ENCODE measurements at regions of chr9 and their contacts with region 1.

Region 1: DNA sequence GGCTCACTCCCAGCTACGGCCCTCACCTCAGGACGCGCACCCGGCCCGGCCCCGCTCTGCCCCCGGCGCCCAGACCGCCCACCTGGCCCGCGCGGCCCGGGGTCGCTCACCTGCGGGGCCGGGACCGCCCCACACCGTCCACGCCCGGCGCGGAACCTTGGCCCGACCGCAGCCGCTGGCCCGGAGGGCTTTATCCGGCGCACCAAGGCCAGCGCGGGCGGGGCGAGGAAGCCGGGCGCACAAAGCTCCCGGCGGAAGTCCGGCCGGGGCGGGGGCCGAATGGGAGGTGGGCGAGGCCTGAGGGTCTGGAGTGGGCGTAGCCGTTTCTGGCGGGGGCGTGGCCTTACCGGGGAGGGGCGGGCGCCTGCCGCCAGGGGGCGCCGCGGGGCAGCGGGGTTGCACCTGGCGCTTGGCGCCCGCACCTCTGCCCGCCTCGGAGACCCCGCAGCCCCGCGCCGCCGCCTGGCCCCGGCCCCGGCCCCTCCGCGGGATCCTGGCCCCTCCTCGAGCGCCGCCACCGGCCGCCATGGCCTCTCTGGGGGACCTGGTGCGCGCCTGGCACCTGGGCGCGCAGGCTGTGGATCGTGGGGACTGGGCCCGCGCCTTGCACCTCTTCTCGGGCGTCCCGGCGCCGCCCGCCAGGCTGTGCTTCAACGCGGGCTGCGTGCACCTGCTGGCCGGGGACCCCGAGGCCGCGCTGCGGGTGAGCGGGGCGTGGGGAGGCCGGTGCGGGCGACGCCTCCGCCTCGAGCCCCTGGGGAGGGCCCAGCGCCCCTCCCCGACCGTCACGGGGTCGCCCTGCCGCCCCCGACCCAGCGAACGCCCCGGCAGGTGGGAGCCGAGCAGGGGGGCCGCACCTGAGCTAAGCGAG is at the starts of genes EXD3 and NOXA1:
- DNase-seq: peak; percentile 98
- ATAC-seq: peak; percentile 95
- H3K4me3 Mint-ChIP-seq: peak within 1 kb of the TSS; percentile 82
- H3K27ac Mint-ChIP-seq: peak within 1 kb of the TSS; percentile 66
- H3K4me1 Mint-ChIP-seq: peaks cover 12% of the 10 kb centered on the region
- H3K27me3 Mint-ChIP-seq: no peaks in the 10 kb centered on the region
- total RNA-seq, gene EXD3: 6.7 to 7.1 TPM
- total RNA-seq, gene NOXA1: 0.97 to 1.7 TPM

Region 2: DNA sequence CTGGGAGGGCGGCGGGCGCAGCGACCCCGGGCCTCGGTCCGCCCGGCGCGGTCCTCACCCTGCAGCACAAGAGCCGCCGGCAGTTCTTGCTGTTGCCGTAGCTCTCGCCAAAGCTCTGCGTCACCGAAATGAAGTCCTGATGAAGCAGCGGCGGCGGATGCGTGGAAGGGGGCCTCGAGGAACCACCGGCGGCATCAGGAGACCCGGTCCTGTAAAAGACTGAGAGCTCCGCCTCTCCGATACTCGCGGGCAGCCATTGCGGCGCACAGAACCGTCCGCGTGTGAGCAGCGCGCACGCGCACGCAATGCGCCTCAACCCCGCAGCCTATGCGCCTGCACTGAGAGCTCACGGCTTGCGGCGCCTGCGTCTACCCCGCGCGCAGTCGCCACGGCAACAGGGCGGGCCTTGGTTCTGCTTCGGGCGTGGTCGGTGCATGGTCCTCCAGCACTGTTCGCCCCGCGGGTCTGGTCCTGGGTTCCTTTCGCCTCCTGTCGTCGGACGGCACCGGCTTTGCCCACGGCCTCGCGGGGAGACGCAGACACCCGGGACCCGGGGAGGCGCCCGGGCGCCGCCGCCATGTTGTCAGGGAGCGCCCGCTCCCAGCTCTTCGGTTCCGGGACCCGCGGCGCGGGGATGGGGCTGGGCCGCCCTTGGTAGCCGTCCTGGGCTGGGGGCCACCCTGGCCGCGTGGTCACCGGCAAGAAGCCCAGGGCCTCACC is 293.6 kb before region 1 on chr9:
- CTCF ChIA-PET with region 1: no interaction called
- POLR2A ChIA-PET with region 1: no interaction called
- intact Hi-C with region 1: loop called in 1 of 2 experiments (anchors 2 kb)
- DNase-seq: peak; percentile 95
- ATAC-seq: peak; percentile 96
- H3K4me3 Mint-ChIP-seq: peak overlapping the region; percentile 89
- H3K27ac Mint-ChIP-seq: peak overlapping the region; percentile 70
- H3K4me1 Mint-ChIP-seq: peaks cover 21% of the 10 kb centered on the region
- H3K27me3 Mint-ChIP-seq: peaks cover 5% of the 10 kb centered on the region

Region 3: GRCh38 chr9:137254624-137255447 is 168.4 kb before region 1 on chr9 and contains the start of gene NELFB:
- CTCF ChIA-PET with region 1: interaction called, 5 read pairs
- POLR2A ChIA-PET with region 1: no interaction called
- intact Hi-C with region 1: loop called in 1 of 2 experiments (anchors 1 kb)
- DNase-seq: peak; percentile 97
- ATAC-seq: peak; percentile 94
- H3K4me3 Mint-ChIP-seq: peak within 1 kb of the TSS; percentile 87
- H3K27ac Mint-ChIP-seq: peak within 1 kb of the TSS; percentile 81
- H3K4me1 Mint-ChIP-seq: peaks cover 18% of the 10 kb centered on the region
- H3K27me3 Mint-ChIP-seq: no peaks in the 10 kb centered on the region
- total RNA-seq, gene NELFB: 41.4 to 54.1 TPM

Region 4: GRCh38 chr9:137445275-137445807 is 22.1 kb after region 1 on chr9:
- CTCF ChIA-PET with region 1: interaction called, 5 read pairs
- POLR2A ChIA-PET with region 1: no interaction called
- intact Hi-C with region 1: loop called (anchors 1 kb)
- DNase-seq: peak; percentile 91
- ATAC-seq: peak; percentile 91
- H3K4me3 Mint-ChIP-seq: no peak overlapping the region
- H3K27ac Mint-ChIP-seq: no peak overlapping the region
- H3K4me1 Mint-ChIP-seq: peaks cover 16% of the 10 kb centered on the region
- H3K27me3 Mint-ChIP-seq: peaks cover 10% of the 10 kb centered on the region

Region 5: DNA sequence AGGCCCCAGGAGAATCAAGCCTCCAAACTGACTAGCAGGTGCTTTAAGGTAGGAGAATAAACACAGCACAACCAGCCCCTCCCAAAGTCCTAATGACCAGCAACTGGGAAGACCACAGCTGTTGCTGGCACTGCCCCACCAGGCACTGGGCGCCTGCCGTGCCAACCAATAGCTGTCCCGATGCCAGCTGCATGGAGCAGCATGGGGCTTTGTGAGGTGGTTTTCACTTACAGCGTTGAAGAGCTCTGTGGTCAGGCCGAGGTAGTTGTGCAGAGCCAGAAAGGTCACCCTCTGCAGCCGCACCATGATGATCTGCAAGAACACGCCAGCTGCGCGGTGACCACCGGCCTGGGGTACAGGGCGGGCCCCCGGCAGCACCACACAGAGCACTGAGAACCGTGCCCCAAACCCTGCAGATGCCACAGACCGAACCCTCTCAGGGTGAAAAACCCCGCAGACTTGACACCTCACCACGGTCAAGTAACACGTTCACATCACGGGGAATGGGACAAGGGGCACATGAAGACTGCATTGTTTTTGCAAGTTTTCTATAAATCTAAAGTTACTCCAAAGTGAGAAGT is 98.3 kb after region 1 on chr9:
- CTCF ChIA-PET with region 1: interaction called, 5 read pairs
- POLR2A ChIA-PET with region 1: no interaction called
- intact Hi-C with region 1: loop called in 1 of 2 experiments (anchors 1 kb)
- DNase-seq: no peak
- ATAC-seq: no peak
- H3K4me3 Mint-ChIP-seq: no peak overlapping the region
- H3K27ac Mint-ChIP-seq: no peak overlapping the region
- H3K4me1 Mint-ChIP-seq: no peaks in the 10 kb centered on the region
- H3K27me3 Mint-ChIP-seq: no peaks in the 10 kb centered on the region

Region 6: GRCh38 chr9:137605121-137606004 is 182.1 kb after region 1 on chr9 and contains the start of gene ARRDC1:
- CTCF ChIA-PET with region 1: interaction called, 3 read pairs
- POLR2A ChIA-PET with region 1: no interaction called
- intact Hi-C with region 1: loop called in 1 of 2 experiments (anchors 1 kb)
- DNase-seq: peak; percentile 97
- ATAC-seq: peak; percentile 92
- H3K4me3 Mint-ChIP-seq: peak within 1 kb of the TSS; percentile 76
- H3K27ac Mint-ChIP-seq: no peak within 1 kb of the TSS
- H3K4me1 Mint-ChIP-seq: peaks cover 24% of the 10 kb centered on the region
- H3K27me3 Mint-ChIP-seq: no peaks in the 10 kb centered on the region
- total RNA-seq, gene ARRDC1: 32.4 to 41.6 TPM